Heart right ventricle (tissue), 16 donors: ENCODE measurements at regions of chr10 and their contacts with region 1.

Region 1: DNA sequence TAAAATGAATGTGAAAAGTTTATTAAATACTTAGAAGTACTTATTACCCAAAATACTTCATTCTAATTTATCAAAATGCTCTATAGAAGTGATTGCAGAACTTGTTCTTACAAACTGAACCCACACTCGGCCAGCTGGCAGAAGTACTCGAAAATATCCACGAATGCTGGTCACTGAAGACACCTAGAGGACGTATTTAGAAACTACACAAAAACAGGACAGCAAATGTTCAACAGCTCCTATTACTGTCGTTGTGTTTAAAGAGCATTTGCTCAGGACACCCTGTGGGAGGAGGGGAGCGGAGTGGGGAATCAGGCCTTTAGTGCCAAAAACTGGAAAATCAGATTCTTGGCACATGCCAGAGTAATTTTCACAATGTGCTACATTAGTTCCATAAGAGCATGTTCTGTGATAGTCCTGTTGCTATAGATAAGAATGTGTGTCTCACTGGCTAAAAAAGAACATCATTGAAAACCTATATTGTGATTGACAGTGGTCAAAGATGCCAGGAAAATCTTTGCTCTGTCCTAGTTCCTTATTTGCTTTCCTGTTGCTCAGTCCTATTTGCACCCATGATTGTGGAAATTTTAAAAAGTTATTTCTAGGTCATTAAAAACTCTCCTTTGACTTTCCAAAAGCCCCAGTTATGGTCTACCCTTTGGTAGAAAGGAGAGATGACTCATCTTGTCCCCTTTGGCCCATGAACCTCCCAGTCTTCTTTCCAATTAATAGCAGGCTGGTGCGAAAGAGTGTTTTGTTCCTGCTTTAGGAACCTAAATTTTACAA is 49.0 kb upstream of the NRBF2 start:
- DNase-seq: peak; percentile 14 to 61
- ATAC-seq: peak; percentile 69 to 91 (median 88)
- H3K4me3 ChIP-seq: no peak overlapping the region
- H3K27ac ChIP-seq: peak overlapping the region in 2 of 10 donors; percentile 3 to 39
- H3K4me1 ChIP-seq: peaks cover 0 to 10% (median 0%) of the 10 kb centered on the region in 9 donors
- H3K27me3 ChIP-seq: peaks cover 0 to 5% (median 0%) of the 10 kb centered on the region in 7 donors
- CTCF ChIP-seq: peak; percentile 27 to 81 (median 70)

Region 2: DNA sequence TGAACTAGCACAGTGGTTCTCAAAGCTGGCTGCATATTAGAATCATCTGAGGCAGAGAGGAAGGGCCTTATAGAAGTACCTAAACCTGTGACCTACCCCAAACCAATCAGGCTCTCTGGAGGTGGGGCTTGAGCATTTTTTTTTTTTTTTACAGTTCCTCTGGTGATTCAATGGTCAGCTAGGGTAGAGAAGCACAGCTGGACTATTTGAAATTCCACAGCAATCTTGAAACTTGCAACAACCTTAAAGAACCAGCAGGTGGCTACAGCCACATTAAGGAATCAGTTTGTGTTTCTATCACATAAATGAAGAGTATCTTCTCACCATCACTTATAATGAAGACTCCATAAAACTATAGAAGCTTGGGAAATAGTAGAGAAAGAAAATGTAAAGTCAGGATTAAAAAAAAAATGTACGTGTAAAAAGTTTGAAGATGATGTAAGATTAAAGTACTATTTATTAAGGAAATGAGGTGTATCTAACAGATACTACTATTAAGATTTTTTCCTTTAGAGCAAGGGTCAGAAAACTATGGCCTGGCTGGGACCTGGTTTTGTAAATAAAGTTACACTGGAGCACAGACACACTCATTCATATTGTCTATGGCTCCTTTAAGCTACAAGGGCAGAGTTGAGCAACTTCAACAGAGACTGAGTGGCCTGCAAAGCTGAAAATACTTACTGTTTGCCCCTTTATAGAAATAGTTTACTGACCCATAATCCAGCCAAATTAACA is 819.2 kb before region 1 on chr10:
- intact Hi-C with region 1: loop called in 1 of 10 experiments (anchors 5 kb)
- DNase-seq: no peak
- ATAC-seq: peak in 4 of 8 donors; percentile 20 to 64 (median 44)
- H3K4me3 ChIP-seq: no peak overlapping the region
- H3K27ac ChIP-seq: no peak overlapping the region
- H3K4me1 ChIP-seq: peaks cover 0 to 17% (median 7%) of the 10 kb centered on the region in 9 donors
- H3K27me3 ChIP-seq: peaks cover 0 to 32% (median 12%) of the 10 kb centered on the region in 7 donors
- CTCF ChIP-seq: peak; percentile 11 to 67 (median 57)

Region 3: GRCh38 chr10:62594093-62594520 is 490.0 kb before region 1 on chr10:
- intact Hi-C with region 1: loop called (anchors 2 to 10 kb)
- DNase-seq: peak; percentile 45 to 65
- ATAC-seq: peak; percentile 79 to 92 (median 85)
- H3K4me3 ChIP-seq: no peak overlapping the region
- H3K27ac ChIP-seq: no peak overlapping the region
- H3K4me1 ChIP-seq: peaks cover 0 to 6% (median 0%) of the 10 kb centered on the region in 9 donors
- H3K27me3 ChIP-seq: peaks cover 0 to 9% (median 0%) of the 10 kb centered on the region in 7 donors
- CTCF ChIP-seq: peak; percentile 70 to 94 (median 87)

Region 4: DNA sequence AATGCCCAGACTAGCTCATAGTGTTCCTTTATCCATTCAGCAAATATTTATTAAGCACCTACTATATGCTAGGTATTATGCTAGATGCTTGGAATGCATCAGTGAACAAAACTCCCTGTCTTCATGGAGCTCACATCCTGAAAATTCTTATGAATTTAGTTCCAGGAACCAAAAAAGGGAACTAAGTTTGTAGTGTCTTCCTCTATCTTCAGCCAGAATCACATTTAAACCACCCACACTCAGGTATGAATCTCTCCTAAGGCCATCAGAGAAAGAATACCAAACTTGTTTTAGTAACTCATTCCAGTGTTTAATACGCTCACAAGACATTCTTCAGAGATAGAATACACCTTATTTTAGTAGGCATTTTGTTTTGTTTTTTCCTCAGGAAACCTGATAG is 257.8 kb before region 1 on chr10:
- intact Hi-C with region 1: loop called in 1 of 10 experiments (anchors 10 kb)
- DNase-seq: no peak
- ATAC-seq: no peak
- H3K4me3 ChIP-seq: no peak overlapping the region
- H3K27ac ChIP-seq: no peak overlapping the region
- H3K4me1 ChIP-seq: no peaks in the 10 kb centered on the region
- H3K27me3 ChIP-seq: peaks cover 0 to 10% (median 0%) of the 10 kb centered on the region in 7 donors
- CTCF ChIP-seq: no peak

Region 5: DNA sequence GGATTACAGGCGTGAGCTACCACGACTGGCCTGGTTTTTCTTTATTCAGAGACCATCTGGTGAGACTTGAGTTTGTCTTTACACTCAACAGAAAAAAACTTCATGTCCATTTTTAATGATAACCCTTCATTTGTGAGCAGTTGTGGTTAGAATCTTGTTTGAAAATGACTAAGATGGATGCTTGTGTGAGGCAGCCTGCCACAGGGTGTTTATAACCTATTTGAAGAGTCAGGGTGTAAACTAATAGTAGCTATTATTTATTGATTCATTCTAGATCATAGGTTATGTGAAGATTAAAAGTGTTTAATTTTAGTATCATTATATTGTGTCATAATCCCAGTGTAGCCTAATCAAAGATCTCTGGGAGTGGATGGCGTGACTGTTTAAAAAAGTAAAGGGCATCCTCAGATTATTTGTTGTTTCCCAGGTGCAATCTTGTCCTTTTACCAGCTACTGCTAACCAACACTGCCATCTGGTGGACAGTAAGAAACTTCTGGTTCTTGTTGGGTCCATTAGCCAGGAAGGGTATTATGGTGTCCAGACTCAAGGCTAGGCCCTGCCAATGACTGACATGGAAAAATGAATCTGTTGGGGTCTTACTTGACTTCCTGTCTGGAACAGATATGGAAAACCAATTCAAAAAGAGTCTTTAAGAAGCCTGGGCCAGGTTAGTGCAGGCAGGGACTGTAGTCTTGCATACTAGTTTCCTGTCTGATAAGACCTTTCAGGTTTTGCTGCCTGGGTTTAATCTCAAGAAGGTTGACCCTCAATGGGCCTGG is 73.9 kb after region 1 on chr10:
- intact Hi-C with region 1: loop called in 3 of 10 experiments (anchors 10 kb)
- DNase-seq: peak in 1 of 2 donors; percentile 28
- ATAC-seq: peak; percentile 67 to 77 (median 71)
- H3K4me3 ChIP-seq: no peak overlapping the region
- H3K27ac ChIP-seq: no peak overlapping the region
- H3K4me1 ChIP-seq: peaks cover 0 to 24% (median 13%) of the 10 kb centered on the region in 9 donors
- H3K27me3 ChIP-seq: no peaks in the 10 kb centered on the region
- CTCF ChIP-seq: peak; percentile 55 to 89 (median 84)